Prostate gland (tissue), 2 donors: ENCODE measurements at regions of chr20 and their contacts with region 1.

Region 1: DNA sequence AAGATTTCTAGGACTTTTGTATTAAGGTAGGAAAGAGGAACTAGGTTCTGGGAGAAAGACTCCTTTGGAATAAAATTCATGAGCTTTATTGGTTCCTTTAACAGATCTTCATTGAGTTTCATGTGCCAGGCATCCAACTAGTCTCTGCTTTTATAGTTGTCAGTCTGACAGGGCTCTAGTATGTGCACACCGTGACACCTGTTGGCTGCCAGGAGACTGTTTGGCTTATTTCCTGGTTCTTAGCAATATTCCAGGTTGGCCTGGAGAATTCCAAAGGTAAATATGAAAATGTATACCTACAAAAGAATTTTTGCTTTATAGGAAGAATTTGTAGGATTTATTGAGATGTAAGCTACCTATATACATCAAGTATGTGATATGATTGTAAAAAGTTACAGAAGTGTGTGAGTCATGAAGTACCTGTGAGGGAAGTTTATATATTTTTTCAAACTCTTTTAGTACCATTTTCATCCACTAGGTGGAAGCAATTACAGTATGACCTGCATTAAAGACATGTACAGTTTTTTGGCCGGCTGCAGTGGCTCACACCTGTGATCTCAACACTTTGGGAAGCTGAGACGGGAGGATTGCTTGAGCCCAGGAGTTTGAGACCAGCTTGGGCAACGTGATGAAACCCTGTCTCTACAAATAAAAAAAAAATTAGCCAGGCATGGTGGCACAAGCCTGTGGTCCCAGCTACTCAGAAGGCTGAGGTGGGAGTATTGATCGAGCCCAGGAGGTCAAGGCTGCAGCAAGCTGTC is 35.2 kb downstream of the NDUFAF5 start:
- DNase-seq: peak; percentile 16
- H3K4me3 ChIP-seq: no peak overlapping the region
- H3K27ac ChIP-seq: no peak overlapping the region
- H3K4me1 ChIP-seq: no peaks in the 10 kb centered on the region
- H3K27me3 ChIP-seq: no peaks in the 10 kb centered on the region
- CTCF ChIP-seq: peak; percentile 57 to 86 (median 75)
- POLR2A ChIP-seq: no peak

Region 2: DNA sequence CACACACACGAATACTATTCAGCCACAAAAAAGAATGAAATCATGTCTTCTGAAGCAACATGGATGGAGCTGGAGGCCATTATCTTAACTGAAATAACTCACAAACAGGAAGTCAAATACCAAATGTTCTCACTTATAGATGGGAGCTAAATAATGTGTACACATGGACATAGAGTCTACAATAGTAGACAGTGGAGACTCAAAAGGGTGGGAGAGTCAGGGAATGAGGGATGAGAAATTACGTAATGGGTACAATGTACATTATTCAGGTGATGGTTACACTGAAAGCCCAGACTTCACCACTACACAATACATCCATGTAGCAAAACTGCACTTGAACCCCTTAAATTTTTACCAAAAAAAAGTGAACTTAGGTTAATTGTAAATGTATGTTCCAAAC is 341.7 kb before region 1 on chr20:
- intact Hi-C with region 1: no loop called
- DNase-seq: no peak
- H3K4me3 ChIP-seq: no peak overlapping the region
- H3K27ac ChIP-seq: no peak overlapping the region
- H3K4me1 ChIP-seq: no peaks in the 10 kb centered on the region
- H3K27me3 ChIP-seq: no peaks in the 10 kb centered on the region
- CTCF ChIP-seq: no peak
- POLR2A ChIP-seq: no peak

Region 3: GRCh38 chr20:13877793-13878192 is 57.7 kb after region 1 on chr20:
- intact Hi-C with region 1: loop called (anchors 5 kb)
- DNase-seq: peak; percentile 13
- H3K4me3 ChIP-seq: no peak overlapping the region
- H3K27ac ChIP-seq: peak overlapping the region in 1 of 2 donors; percentile 33
- H3K4me1 ChIP-seq: no peaks in the 10 kb centered on the region
- H3K27me3 ChIP-seq: no peaks in the 10 kb centered on the region
- CTCF ChIP-seq: no peak
- POLR2A ChIP-seq: no peak

Region 4: DNA sequence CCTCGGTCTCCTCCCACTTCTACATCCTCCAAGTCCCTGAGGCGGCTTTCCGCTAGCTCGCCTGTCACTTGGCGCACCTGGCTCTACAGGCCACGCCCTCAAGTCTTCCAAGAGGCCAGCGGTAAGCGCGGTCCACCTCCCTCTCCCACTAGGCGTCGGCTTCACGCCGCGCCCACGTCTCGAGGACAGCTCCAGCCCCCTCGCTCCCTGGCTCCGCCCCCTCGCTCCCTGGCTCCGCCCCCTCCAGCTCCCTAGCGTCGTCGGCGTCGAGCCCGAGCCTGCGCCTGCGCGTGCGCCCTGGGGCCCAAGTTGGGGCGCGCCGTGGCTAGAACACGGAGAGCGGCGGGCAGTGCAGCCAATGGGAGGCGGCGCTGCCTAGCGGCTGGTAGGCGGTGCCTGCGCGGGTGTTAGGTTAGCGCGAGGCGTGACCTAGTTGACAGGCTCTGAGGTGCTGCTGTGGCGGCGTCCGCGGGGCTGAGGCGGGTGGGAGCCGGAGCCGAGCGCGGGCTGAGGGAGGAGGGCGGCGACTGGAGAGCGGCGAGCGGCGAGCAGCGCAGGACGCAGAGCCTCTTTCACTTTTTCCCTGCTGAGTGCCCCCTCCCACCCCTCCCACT is 175.1 kb after region 1 on chr20 and contains the start of gene MACROD2:
- intact Hi-C with region 1: loop called (anchors 2 kb)
- DNase-seq: peak; percentile 87
- H3K4me3 ChIP-seq: peak within 1 kb of the TSS; percentile 65 to 76
- H3K27ac ChIP-seq: peak within 1 kb of the TSS; percentile 71 to 73
- H3K4me1 ChIP-seq: no peaks in the 10 kb centered on the region
- H3K27me3 ChIP-seq: no peaks in the 10 kb centered on the region
- CTCF ChIP-seq: peak in 2 of 4 experiments; percentile 33 to 43
- POLR2A ChIP-seq: peak; percentile 69
- total RNA-seq, gene MACROD2: 8.0 to 19.4 TPM

Region 5: DNA sequence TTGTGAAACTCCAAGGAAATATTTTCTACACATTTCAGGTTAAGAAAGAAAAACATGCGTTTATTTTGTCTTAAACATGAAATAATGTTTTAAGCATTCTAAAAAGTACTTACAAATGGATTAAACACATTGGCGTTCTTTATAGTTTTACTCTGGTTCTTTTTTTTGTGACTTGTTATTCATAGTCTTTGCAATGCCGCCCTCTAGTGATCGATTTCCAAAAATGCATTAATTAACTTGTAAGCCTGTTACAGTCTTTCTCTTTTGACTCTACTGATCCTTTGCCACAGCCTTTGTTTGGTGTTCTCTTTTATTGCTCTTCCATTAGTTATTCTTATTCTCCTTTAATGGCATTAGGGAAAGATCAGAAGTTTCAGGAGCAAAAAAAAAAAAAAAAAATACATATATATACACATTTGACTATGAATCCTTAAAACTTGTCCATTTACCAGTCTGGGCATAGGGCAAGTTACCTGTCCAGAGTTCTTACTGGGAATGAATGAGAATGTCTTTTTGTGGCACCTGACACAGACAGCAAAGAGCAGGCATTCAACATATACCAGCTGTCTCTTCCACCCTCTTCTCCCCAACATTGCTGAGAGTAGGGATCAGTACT is 235.2 kb after region 1 on chr20:
- intact Hi-C with region 1: loop called (anchors 2 kb)
- DNase-seq: peak; percentile 55
- H3K4me3 ChIP-seq: no peak overlapping the region
- H3K27ac ChIP-seq: no peak overlapping the region
- H3K4me1 ChIP-seq: no peaks in the 10 kb centered on the region
- H3K27me3 ChIP-seq: no peaks in the 10 kb centered on the region
- CTCF ChIP-seq: peak; percentile 30 to 69 (median 59)
- POLR2A ChIP-seq: no peak